Activated CD8-positive, alpha-beta T cell treated with anti-CD3 and anti-CD28 coated beads, Interleukin-2, amount 10 ng/mL, durations not matched to agents 7 days and 5 days (primary cell): ENCODE measurements at regions of chr2 and their contacts with region 1.

Region 1: DNA sequence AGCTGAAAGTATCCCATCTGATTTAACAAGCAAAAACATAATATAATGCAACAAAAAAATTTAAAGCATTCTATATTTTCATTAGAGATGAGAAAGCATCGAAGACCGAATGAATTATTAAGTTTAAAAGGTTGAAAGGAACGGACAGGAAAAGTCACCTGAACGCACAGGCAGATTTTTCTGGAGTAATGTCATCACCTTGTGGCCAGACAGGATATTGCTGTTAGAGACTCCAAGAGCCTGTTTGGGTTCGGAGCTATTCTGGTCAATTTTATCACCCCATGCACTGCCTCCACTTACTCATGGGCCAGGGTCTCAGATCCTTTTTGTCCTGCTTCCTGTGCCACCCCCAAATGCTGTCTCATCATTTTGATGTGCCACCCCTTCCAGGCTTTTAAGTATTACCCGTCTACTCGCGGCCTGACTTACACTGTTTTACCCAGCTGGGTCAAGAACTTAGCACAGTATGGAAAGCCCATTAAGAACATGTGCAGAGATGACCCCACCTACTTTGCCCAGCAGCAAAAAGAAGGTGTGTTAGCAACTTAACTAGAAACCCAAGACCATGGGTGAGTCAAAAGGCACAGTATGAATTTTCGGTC is 27.3 kb downstream of the GKN2 start:
- DNase-seq: peak; percentile 75
- ATAC-seq: peak; percentile 87
- H3K4me3 Mint-ChIP-seq: no peak overlapping the region
- H3K27ac Mint-ChIP-seq: no peak overlapping the region
- H3K4me1 Mint-ChIP-seq: peaks cover 10% of the 10 kb centered on the region
- H3K27me3 Mint-ChIP-seq: peaks cover 3% of the 10 kb centered on the region

Region 2: GRCh38 chr2:68487773-68488355 is 437.5 kb before region 1 on chr2:
- CTCF ChIA-PET with region 1: interaction called, 21 read pairs
- POLR2A ChIA-PET with region 1: no interaction called
- DNase-seq: no peak
- ATAC-seq: peak; percentile 49
- H3K4me3 Mint-ChIP-seq: no peak overlapping the region
- H3K27ac Mint-ChIP-seq: no peak overlapping the region
- H3K4me1 Mint-ChIP-seq: peaks cover 3% of the 10 kb centered on the region
- H3K27me3 Mint-ChIP-seq: no peaks in the 10 kb centered on the region

Region 3: GRCh38 chr2:68709421-68709911 is 215.9 kb before region 1 on chr2:
- CTCF ChIA-PET with region 1: interaction called, 68 read pairs
- POLR2A ChIA-PET with region 1: no interaction called
- DNase-seq: peak; percentile 39
- ATAC-seq: peak; percentile 84
- H3K4me3 Mint-ChIP-seq: no peak overlapping the region
- H3K27ac Mint-ChIP-seq: peak overlapping the region; percentile 74
- H3K4me1 Mint-ChIP-seq: peaks cover 33% of the 10 kb centered on the region
- H3K27me3 Mint-ChIP-seq: peaks cover 9% of the 10 kb centered on the region

Region 4: DNA sequence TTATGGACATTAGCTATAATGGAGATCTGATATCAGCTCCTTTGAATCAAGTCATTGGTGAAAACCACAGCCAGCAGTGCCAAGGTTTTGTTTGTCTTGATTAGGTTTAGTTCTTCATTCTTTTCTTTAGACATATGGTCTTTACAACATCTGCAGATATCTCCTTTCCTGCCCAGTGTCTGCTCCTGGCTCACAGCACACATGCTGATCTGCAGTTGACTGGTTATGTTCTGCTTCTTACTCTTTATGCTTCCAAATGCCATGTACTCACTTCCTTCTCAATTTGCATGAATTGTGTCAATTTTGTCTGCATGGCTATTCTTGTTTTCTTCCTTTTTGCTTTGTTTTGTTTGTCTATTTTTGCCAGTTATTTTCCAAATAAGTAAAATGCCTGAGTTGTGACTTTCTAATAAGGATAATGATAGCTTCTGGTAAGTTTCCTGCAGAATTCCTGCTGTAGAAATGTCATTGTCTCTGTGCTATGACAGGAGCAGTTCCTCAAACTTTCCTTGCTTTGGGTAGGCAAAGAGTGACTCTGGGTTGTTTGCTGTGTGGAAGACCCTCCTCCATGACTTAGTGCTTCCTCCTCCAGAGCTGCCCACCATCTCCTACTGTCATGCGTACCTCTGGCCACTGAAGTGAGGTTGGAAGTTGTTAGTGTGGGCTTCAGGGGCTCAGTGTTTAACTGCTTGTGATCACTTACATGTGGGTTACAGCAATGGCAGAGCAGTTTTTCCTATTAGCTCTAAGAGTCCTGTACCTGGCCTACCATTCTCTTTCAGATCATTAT is 182.6 kb before region 1 on chr2:
- CTCF ChIA-PET with region 1: interaction called, 20 read pairs
- POLR2A ChIA-PET with region 1: no interaction called
- DNase-seq: peak; percentile 23
- ATAC-seq: no peak
- H3K4me3 Mint-ChIP-seq: no peak overlapping the region
- H3K27ac Mint-ChIP-seq: peak overlapping the region; percentile 12
- H3K4me1 Mint-ChIP-seq: peaks cover 93% of the 10 kb centered on the region
- H3K27me3 Mint-ChIP-seq: no peaks in the 10 kb centered on the region

Region 5: GRCh38 chr2:68774569-68775271 is 150.7 kb before region 1 on chr2:
- CTCF ChIA-PET with region 1: interaction called, 11 read pairs
- POLR2A ChIA-PET with region 1: no interaction called
- DNase-seq: peak; percentile 77
- ATAC-seq: peak; percentile 84
- H3K4me3 Mint-ChIP-seq: peak overlapping the region; percentile 81
- H3K27ac Mint-ChIP-seq: peak overlapping the region; percentile 97
- H3K4me1 Mint-ChIP-seq: peaks cover 86% of the 10 kb centered on the region
- H3K27me3 Mint-ChIP-seq: no peaks in the 10 kb centered on the region

Region 6: DNA sequence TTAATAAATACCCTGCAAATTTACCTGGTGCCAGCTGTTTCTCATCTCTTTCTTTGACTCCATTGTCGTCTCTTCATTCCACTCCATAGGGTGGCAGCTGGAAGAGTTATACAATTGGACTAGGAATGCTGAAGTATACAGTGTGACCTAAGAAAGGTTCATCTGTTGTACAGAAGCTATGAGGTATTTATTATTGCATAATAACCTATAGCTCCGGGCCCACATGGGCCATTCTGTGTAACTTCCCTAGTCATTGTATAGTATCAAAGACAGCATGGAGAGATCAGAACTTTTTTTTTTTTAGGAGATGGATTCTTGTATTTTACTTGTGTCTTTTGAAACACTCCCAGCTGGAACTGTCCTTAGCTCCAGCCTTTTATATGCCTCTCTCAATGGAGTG is 80.4 kb before region 1 on chr2:
- CTCF ChIA-PET with region 1: interaction called, 53 read pairs
- POLR2A ChIA-PET with region 1: no interaction called
- DNase-seq: no peak
- ATAC-seq: no peak
- H3K4me3 Mint-ChIP-seq: no peak overlapping the region
- H3K27ac Mint-ChIP-seq: no peak overlapping the region
- H3K4me1 Mint-ChIP-seq: no peaks in the 10 kb centered on the region
- H3K27me3 Mint-ChIP-seq: peaks cover 31% of the 10 kb centered on the region

Region 7: DNA sequence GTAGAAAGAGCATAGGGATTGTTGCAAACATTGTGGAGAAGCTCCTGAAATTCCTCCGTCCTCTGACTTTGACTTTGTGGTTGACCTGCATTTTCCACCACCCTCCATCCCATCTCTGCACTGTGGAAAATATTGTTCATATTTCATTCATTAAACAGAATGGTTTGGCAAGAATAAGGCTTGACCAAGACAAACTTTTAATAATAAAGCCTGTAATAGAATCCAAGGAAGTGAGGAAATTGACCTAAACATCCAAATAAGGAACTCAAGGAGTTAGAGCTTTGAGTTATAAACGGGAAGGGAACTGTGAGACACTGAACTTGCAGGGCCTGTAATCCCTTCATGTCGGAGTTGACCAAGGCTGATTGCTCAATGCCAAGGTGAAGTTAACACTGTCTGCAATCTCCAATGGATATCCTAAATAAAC is 346.4 kb after region 1 on chr2:
- CTCF ChIA-PET with region 1: no interaction called
- POLR2A ChIA-PET with region 1: no interaction called
- DNase-seq: no peak
- ATAC-seq: no peak
- H3K4me3 Mint-ChIP-seq: no peak overlapping the region
- H3K27ac Mint-ChIP-seq: no peak overlapping the region
- H3K4me1 Mint-ChIP-seq: no peaks in the 10 kb centered on the region
- H3K27me3 Mint-ChIP-seq: peaks cover 36% of the 10 kb centered on the region